HCT116 (cell line): ENCODE measurements at regions of chr11 and their contacts with region 1.

Region 1: GRCh38 chr11:33970984-33971466 is 79.1 kb upstream of the LMO2 start:
- DNase-seq: peak; percentile 64
- ATAC-seq: peak; percentile 94
- H3K4me3 ChIP-seq: peak overlapping the region in 1 of 2 experiments; percentile 50; a peak in 1 of 4 replicates
- H3K27ac ChIP-seq: no peak overlapping the region
- H3K4me1 ChIP-seq: peaks cover 2 to 15% of the 10 kb centered on the region in 2 experiments; a peak in 3 of 4 replicates
- H3K27me3 ChIP-seq: no peaks in the 10 kb centered on the region
- CTCF ChIP-seq: peak; percentile 72 to 91 (median 76)
- POLR2A ChIP-seq: no peak
- RAD21 ChIP-seq: peak; percentile 96

Region 2: DNA sequence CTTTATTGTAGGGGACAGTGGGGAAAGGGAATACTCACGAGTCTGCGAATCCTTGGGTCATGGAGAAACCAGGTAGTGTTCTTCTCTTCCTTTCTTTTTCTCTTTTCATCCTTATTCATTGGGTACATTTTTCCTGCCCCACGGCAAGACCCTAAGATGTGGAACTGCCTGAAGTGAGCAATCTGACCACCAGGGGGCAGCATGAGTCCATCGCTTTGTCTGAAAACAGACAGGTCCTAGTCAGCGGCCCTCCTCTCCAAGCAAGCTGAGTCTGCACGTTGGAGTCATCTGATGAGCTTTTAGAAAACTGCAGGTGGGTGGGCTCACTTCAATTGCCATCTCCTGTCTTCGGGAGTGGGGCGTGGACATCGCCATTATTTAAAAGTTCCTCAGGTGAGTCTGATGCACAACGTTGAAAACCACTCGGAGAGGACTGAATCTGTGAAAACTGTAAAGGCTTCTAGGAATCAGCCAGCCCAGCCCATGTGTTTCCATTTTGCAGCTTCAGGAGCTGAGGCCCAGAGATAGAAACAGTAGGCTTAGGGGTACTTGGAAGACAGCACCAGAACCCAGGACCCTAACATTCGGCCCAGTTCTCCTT is 162.7 kb before region 1 on chr11:
- CTCF ChIA-PET with region 1: interaction called, 12 read pairs
- POLR2A ChIA-PET with region 1: no interaction called
- RAD21 ChIA-PET with region 1: interaction called in 1 of 2 experiments, 3 read pairs
- intact Hi-C with region 1: loop called (anchors 2 kb)
- DNase-seq: peak; percentile 75
- ATAC-seq: peak; percentile 100
- H3K4me3 ChIP-seq: no peak overlapping the region
- H3K27ac ChIP-seq: no peak overlapping the region
- H3K4me1 ChIP-seq: peaks cover 0 to 6% of the 10 kb centered on the region in 2 experiments; a peak in 1 of 4 replicates
- H3K27me3 ChIP-seq: no peaks in the 10 kb centered on the region
- CTCF ChIP-seq: peak; percentile 78 to 93 (median 90); a peak in 5 of 6 replicates
- POLR2A ChIP-seq: no peak
- RAD21 ChIP-seq: peak; percentile 88

Region 3: GRCh38 chr11:33835143-33835878 is 135.7 kb before region 1 on chr11:
- CTCF ChIA-PET with region 1: interaction called, 16 read pairs
- POLR2A ChIA-PET with region 1: no interaction called
- RAD21 ChIA-PET with region 1: interaction called in 1 of 2 experiments, 3 read pairs
- intact Hi-C with region 1: loop called (anchors 1 kb)
- DNase-seq: peak; percentile 48
- ATAC-seq: peak; percentile 80
- H3K4me3 ChIP-seq: no peak overlapping the region; a peak in 1 of 4 replicates
- H3K27ac ChIP-seq: no peak overlapping the region
- H3K4me1 ChIP-seq: peaks cover 0 to 18% of the 10 kb centered on the region in 2 experiments; a peak in 2 of 4 replicates
- H3K27me3 ChIP-seq: 0 out of 2 replicates have a peak, but pooled peaks cover 3% of the 10 kb centered on the region
- CTCF ChIP-seq: peak; percentile 18 to 69 (median 36); a peak in 4 of 6 replicates
- POLR2A ChIP-seq: no peak
- RAD21 ChIP-seq: peak; percentile 75

Region 4: DNA sequence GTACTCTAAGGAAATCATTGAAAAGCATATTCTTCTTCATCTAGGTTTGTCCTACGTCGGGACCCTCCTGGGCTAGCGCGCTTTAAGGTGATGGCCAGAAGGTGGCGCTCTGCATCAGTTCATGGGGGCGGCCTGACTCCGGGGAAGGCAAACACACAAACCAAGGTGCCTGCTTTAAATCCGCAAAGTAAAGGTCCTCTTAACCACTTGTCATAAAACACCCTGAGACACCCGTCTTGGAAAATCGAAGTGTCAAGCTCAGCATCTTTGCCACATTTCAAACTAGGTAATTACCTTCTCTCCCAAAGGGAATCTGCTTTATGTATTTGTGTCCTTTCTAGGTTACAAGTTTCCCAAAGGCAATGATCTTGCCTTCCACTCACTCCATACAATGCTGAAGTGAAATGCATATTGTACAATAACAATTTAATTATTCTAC is 113.1 kb before region 1 on chr11:
- CTCF ChIA-PET with region 1: interaction called, 14 read pairs
- POLR2A ChIA-PET with region 1: no interaction called
- RAD21 ChIA-PET with region 1: no interaction called
- intact Hi-C with region 1: loop called (anchors 1 kb)
- DNase-seq: peak; percentile 55
- ATAC-seq: peak; percentile 99
- H3K4me3 ChIP-seq: no peak overlapping the region
- H3K27ac ChIP-seq: no peak overlapping the region
- H3K4me1 ChIP-seq: peaks cover 0 to 3% of the 10 kb centered on the region in 2 experiments; a peak in 1 of 4 replicates
- H3K27me3 ChIP-seq: no peaks in the 10 kb centered on the region
- CTCF ChIP-seq: peak; percentile 88 to 98 (median 95)
- POLR2A ChIP-seq: no peak
- RAD21 ChIP-seq: peak; percentile 97

Region 5: DNA sequence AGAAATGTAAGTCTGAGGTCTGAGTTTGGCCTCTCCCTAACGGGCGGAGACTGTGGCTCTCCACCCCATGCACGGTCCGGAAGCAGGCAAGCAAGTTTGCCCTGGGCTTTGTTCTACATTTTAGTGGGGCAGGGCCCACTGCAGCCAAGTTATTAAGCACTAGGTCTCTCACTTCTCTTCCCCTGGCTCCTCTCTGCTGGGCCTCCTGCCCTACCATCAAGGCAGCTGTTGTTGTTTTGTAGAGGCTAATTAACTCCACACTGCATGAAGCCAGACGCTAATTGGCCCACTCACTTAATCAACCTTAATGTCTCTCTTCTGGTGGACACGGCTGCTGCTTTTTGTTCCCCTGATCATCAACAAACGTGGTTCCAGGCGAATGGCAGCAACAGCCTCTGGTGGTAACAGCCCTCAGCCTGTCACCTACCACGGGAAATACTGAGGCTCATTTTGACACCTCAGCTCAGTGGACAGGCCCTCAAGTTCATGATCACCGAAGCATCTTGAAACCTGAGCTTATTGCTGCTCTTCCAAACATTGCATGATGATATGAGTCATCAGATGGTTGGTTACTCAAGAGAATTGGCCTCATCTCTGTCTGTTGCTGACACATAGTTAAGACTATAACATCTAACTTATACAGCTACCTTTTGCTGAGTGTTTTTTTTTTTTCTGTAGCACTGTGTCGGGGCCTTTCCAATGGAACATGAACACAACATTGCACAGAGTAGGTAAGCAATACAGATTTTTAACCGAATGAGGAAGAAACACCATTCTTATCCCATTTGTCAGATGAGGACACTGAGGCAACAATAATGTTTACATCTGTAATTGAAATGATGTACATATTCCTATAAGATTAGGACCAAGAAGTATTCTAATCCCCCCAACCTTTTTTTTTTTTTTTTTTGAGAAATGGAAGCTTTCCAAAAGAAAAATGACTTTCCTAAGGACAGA is 58.3 kb before region 1 on chr11:
- CTCF ChIA-PET with region 1: no interaction called
- POLR2A ChIA-PET with region 1: no interaction called
- RAD21 ChIA-PET with region 1: no interaction called
- intact Hi-C with region 1: no loop called
- DNase-seq: peak; percentile 10
- ATAC-seq: peak; percentile 52
- H3K4me3 ChIP-seq: no peak overlapping the region
- H3K27ac ChIP-seq: no peak overlapping the region
- H3K4me1 ChIP-seq: peaks cover 5 to 10% of the 10 kb centered on the region in 2 experiments; a peak in 3 of 4 replicates
- H3K27me3 ChIP-seq: no peaks in the 10 kb centered on the region
- CTCF ChIP-seq: no peak
- POLR2A ChIP-seq: no peak
- RAD21 ChIP-seq: no peak

Region 6: GRCh38 chr11:34149786-34150185 is 178.8 kb after region 1 on chr11:
- CTCF ChIA-PET with region 1: no interaction called
- POLR2A ChIA-PET with region 1: no interaction called
- RAD21 ChIA-PET with region 1: no interaction called
- intact Hi-C with region 1: no loop called
- DNase-seq: no peak
- ATAC-seq: peak; percentile 72
- H3K4me3 ChIP-seq: no peak overlapping the region
- H3K27ac ChIP-seq: no peak overlapping the region
- H3K4me1 ChIP-seq: no peaks in the 10 kb centered on the region
- H3K27me3 ChIP-seq: no peaks in the 10 kb centered on the region
- CTCF ChIP-seq: peak; percentile 30 to 52 (median 44); a peak in 5 of 6 replicates
- POLR2A ChIP-seq: no peak
- RAD21 ChIP-seq: peak; percentile 53